Esophagus muscularis mucosa (tissue), 4 donors: ENCODE measurements at regions of chr3 and their contacts with region 1.

Region 1: GRCh38 chr3:132029182-132029902 is 5.5 kb downstream of the CPNE4 start:
- DNase-seq: no peak
- H3K4me3 ChIP-seq: no peak overlapping the region
- H3K27ac ChIP-seq: no peak overlapping the region
- H3K4me1 ChIP-seq: peaks cover 6 to 15% (median 9%) of the 10 kb centered on the region in 4 donors
- H3K27me3 ChIP-seq: peaks cover 0 to 34% (median 5%) of the 10 kb centered on the region in 4 donors
- CTCF ChIP-seq: peak; percentile 49 to 75 (median 54)
- EP300 ChIP-seq: no peak
- POLR2A ChIP-seq: no peak

Region 2: GRCh38 chr3:131794766-131795388 is 234.5 kb before region 1 on chr3:
- intact Hi-C with region 1: loop called (anchors 5 kb)
- DNase-seq: no peak
- H3K4me3 ChIP-seq: no peak overlapping the region
- H3K27ac ChIP-seq: no peak overlapping the region
- H3K4me1 ChIP-seq: peaks cover 0 to 13% (median 0%) of the 10 kb centered on the region in 4 donors
- H3K27me3 ChIP-seq: no peaks in the 10 kb centered on the region
- CTCF ChIP-seq: peak; percentile 55 to 79 (median 66)
- EP300 ChIP-seq: no peak
- POLR2A ChIP-seq: no peak

Region 3: DNA sequence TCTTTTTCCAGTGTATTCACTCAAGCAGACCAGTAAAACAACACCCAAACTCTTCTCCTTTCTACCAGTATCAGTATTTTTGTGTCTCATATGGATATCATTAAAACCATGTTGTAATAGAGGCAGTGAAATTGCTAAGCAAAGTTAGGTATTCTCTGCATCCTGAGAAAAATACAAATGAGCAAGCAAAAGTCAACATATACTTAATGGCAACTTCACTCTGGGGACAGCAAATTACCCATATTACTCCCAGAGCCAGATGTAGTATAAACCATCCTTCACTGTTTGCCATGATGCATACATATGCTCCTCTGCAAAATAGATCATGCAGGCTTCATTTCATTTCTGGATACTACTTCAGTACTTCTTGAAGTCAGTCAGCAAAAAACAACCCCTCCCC is 652.9 kb after region 1 on chr3:
- intact Hi-C with region 1: no loop called
- DNase-seq: no peak
- H3K4me3 ChIP-seq: no peak overlapping the region
- H3K27ac ChIP-seq: no peak overlapping the region
- H3K4me1 ChIP-seq: peaks cover 0 to 5% (median 0%) of the 10 kb centered on the region in 4 donors
- H3K27me3 ChIP-seq: no peaks in the 10 kb centered on the region
- CTCF ChIP-seq: no peak
- EP300 ChIP-seq: no peak
- POLR2A ChIP-seq: no peak